ENCODE measurements at regions of chr5 and their contacts with region 1.

Region 1: GRCh38 chr5:138459311-138459933 is 5.9 kb upstream of the EGR1 start:
- DNase-seq: no peak
- H3K4me3 ChIP-seq: no peak overlapping the region
- H3K27ac ChIP-seq: no peak overlapping the region
- H3K4me1 ChIP-seq: peaks cover 62% of the 10 kb centered on the region
- H3K27me3 ChIP-seq: no peaks in the 10 kb centered on the region
- CTCF ChIP-seq: no peak

Region 2: DNA sequence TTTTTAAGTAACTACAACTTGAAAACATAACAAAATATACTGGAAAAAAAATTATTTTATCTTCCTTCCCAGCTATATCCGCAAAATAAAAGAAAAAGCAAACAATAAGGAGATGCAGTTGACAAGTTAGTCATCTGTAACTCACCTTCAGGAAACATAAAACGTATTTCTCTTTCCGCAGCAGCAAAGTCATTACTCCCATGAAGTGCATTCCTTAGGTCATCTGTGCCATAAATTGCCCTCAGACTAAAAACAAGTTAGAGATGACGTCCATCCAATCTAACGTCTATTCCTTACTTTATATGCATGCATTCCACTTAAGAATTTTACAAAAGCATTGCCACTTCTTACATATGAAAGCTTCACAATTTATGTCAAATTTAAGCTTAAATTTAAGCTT is 331.1 kb before region 1 on chr5:
- intact Hi-C with region 1: no loop called
- DNase-seq: no peak
- H3K4me3 ChIP-seq: no peak overlapping the region
- H3K27ac ChIP-seq: no peak overlapping the region
- H3K4me1 ChIP-seq: no peaks in the 10 kb centered on the region
- H3K27me3 ChIP-seq: no peaks in the 10 kb centered on the region
- CTCF ChIP-seq: no peak

Region 3: DNA sequence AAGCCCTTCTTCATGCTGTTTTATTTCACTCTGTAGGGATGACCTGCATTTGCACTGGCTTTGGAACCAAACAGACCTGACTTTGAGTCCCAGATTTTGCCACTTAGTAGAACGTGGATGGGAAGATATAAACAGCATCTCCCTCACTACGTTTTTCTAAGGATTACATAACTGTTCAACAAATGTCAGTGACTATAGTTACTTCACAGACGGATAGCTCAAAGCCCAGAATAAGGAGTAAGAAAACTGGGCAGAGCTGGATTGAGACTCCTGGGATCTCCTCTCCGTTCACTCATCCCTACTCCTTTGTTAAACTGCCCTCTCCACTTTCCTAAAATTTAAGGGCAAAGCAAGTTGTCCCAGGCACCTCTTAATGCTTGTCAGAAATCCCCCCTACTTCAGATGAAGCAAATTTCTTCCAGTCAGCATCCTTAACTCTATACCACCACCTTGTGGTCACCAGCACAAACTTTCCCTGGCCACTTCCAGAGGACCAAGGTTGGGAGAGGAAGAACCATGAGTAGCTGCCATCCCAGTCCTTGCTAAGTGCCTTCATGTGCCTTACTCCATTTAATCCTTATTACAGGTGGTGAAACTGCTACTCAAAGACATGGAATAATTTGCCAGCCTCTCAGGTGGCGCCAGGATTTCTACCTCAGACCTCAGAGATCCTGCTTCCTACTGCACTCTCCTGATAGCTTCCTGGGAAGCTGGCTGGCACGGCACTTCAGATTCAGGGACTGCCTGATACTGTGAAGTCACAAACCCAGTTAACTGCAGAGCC is 44.3 kb after region 1 on chr5:
- intact Hi-C with region 1: loop called (anchors 5 kb)
- DNase-seq: no peak
- H3K4me3 ChIP-seq: no peak overlapping the region
- H3K27ac ChIP-seq: peak overlapping the region; percentile 59
- H3K4me1 ChIP-seq: peaks cover 38% of the 10 kb centered on the region
- H3K27me3 ChIP-seq: no peaks in the 10 kb centered on the region
- CTCF ChIP-seq: peak; percentile 80